ENCODE measurements at regions of chr7 and their contacts with region 1.

Region 1: DNA sequence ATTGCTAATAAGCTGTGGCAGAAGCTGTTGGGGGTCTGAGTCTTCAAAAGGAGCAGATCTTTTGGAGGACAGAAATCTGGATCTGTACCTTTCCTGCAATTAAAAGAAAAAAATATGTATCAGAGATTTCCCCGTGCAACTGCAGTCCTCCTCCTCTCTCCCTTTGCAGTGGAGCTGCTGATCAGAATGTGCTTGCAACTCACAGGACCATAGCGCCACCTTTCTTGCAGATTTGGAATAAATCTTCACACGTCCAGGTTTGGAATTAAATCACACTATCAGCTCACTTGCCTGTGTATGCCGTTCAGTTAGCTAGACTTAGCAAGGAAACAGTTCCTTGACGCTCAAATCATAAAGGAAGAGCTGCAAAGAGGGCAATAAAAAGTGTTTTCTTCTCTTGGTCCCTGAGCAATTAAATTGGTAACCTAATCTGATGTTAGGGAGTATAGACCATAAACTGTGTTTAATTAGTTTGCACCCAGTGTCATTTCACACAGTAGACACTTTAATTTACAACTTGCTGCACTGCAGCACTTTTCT is 77.4 kb downstream of the PON1 start:
- DNase-seq: peak; percentile 26 to 71 (median 36)
- ATAC-seq: peak; percentile 89
- H3K4me3 ChIP-seq: no peak overlapping the region
- H3K27ac ChIP-seq: no peak overlapping the region
- H3K4me1 ChIP-seq: no peaks in the 10 kb centered on the region
- H3K27me3 ChIP-seq: no peaks in the 10 kb centered on the region
- CTCF ChIP-seq: peak; percentile 62 to 77 (median 68)
- EP300 ChIP-seq: no peak
- POLR2A ChIP-seq: no peak
- RAD21 ChIP-seq: peak; percentile 39 to 67; a peak in 2 of 4 replicates

Region 2: DNA sequence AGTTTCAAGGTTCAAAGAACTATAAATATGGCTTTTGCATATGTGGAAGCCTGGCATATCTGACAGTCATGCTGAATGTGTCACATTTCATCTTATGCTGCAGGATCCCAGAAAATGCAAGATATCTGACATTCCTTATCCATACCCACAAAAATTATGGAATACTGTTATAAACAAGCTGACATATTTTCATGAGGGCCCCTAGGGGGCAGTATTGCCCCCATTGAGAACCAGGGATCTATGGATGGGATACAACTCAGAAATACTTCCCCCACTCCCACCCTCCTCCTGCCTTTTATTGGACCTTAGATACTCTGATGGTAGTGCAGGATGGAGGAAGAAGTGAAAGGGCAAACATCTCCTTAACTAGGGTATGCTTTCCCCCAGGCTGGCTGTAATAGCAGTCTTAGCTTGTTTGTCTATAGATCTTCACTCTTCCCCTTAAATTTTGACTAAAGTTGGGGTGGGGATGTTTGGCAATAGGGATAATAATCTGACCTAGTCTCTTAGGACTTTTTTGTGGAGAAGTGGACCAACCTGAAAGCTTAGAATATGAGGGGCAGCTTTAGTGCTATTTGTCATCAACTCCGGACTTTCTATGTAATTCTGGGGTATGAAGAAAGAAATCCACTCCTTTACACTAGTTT is 1344.0 kb before region 1 on chr7:
- CTCF ChIA-PET with region 1: no interaction called
- POLR2A ChIA-PET with region 1: no interaction called
- in situ Hi-C with region 1: no loop called
- intact Hi-C with region 1: loop called (anchors 5 kb)
- DNase-seq: peak; percentile 51 to 60 (median 56)
- ATAC-seq: peak; percentile 83
- H3K4me3 ChIP-seq: no peak overlapping the region
- H3K27ac ChIP-seq: no peak overlapping the region
- H3K4me1 ChIP-seq: no peaks in the 10 kb centered on the region
- H3K27me3 ChIP-seq: no peaks in the 10 kb centered on the region
- CTCF ChIP-seq: peak; percentile 65 to 87 (median 79)
- EP300 ChIP-seq: no peak
- POLR2A ChIP-seq: no peak
- RAD21 ChIP-seq: peak; percentile 64 to 80

Region 3: GRCh38 chr7:94289071-94289470 is 957.8 kb before region 1 on chr7:
- CTCF ChIA-PET with region 1: interaction called, 3 read pairs
- POLR2A ChIA-PET with region 1: no interaction called
- in situ Hi-C with region 1: no loop called
- intact Hi-C with region 1: loop called (anchors 10 kb)
- DNase-seq: peak in 2 of 4 experiments; percentile 47 to 60
- ATAC-seq: peak; percentile 84
- H3K4me3 ChIP-seq: no peak overlapping the region
- H3K27ac ChIP-seq: no peak overlapping the region
- H3K4me1 ChIP-seq: no peaks in the 10 kb centered on the region
- H3K27me3 ChIP-seq: no peaks in the 10 kb centered on the region
- CTCF ChIP-seq: peak; percentile 70 to 78 (median 75)
- EP300 ChIP-seq: no peak
- POLR2A ChIP-seq: no peak
- RAD21 ChIP-seq: peak; percentile 70 to 88

Region 4: DNA sequence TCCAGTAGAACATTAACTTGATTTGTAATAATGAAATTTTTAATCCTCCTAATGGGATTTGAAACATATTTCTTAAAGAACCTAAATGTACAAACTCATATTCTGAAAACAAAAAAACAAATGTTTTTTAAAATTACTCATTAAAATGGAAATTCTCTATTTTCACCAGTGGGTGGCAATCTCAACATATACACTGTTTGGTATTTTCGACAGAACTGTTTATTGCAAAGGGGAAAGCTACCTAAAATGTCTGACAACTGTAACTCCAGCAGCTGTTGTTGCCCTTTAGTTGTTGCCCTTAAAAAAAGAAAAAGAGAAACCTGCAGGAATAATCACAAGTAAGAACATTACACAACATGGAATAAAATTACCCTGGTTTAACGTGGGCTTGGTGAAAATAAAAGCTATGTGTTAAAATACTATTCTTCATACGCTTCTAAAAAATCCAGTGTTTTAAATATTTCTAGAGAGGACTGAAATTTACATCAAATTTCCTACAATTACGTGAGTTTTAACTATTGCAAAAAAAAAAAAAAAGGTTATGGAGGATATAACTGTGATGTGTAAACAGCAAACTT is 797.7 kb before region 1 on chr7:
- CTCF ChIA-PET with region 1: interaction called, 8 read pairs
- POLR2A ChIA-PET with region 1: interaction called, 3 read pairs
- in situ Hi-C with region 1: no loop called
- intact Hi-C with region 1: loop called (anchors 2 kb)
- DNase-seq: peak; percentile 21 to 34 (median 26)
- ATAC-seq: peak; percentile 65
- H3K4me3 ChIP-seq: no peak overlapping the region
- H3K27ac ChIP-seq: no peak overlapping the region
- H3K4me1 ChIP-seq: no peaks in the 10 kb centered on the region
- H3K27me3 ChIP-seq: no peaks in the 10 kb centered on the region
- CTCF ChIP-seq: peak; percentile 32 to 68 (median 38); a peak in 3 of 6 replicates
- EP300 ChIP-seq: no peak
- POLR2A ChIP-seq: no peak
- RAD21 ChIP-seq: peak; percentile 74 to 80

Region 5: DNA sequence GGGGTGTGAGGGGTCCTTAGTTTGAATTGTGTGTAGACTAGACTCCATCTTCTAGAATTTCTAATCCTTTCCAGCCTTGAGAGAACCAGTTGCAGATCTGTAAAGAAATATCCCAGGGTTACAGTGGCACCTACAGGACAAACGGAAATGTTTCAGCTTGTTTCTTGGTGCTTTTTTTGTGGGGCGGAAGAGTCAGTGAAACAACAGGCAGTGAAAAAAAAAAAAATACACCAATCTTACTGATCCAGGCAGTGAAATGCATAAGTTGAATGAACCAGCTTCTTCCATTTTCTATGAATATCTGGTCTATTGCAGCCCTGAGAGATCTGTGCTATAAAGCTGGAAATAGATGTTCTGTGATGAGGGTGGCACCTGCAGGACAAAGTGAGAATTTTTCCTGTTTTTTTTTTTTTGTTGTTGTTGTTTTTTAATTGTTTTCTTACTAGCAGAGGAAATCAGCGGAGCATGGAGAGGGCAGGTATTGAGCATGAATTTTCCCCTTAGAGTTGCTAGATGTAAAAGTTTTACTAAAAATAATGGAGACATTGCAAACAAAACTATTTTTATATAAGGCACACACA is 443.6 kb after region 1 on chr7:
- CTCF ChIA-PET with region 1: no interaction called
- POLR2A ChIA-PET with region 1: no interaction called
- in situ Hi-C with region 1: no loop called
- intact Hi-C with region 1: no loop called
- DNase-seq: peak; percentile 23 to 45 (median 34)
- ATAC-seq: peak; percentile 86
- H3K4me3 ChIP-seq: no peak overlapping the region
- H3K27ac ChIP-seq: no peak overlapping the region
- H3K4me1 ChIP-seq: no peaks in the 10 kb centered on the region
- H3K27me3 ChIP-seq: no peaks in the 10 kb centered on the region
- CTCF ChIP-seq: peak; percentile 64 to 75 (median 65)
- EP300 ChIP-seq: no peak
- POLR2A ChIP-seq: no peak
- RAD21 ChIP-seq: peak; percentile 67 to 81